ENCODE measurements at regions of chr22 and their contacts with region 1.

Region 1: GRCh38 chr22:31211862-31212730 is at the start of gene LIMK2:
- DNase-seq: peak; percentile 95
- H3K4me3 ChIP-seq: peak within 1 kb of the TSS; percentile 76 to 91
- H3K27ac ChIP-seq: peak within 1 kb of the TSS; percentile 80 to 83
- H3K4me1 ChIP-seq: peaks cover 19% of the 10 kb centered on the region
- H3K27me3 ChIP-seq: no peaks in the 10 kb centered on the region
- CTCF ChIP-seq: peak; percentile 81 to 92 (median 86)
- POLR2A ChIP-seq: peak; percentile 77
- total RNA-seq, gene LIMK2: 92.1 to 128 TPM

Region 2: GRCh38 chr22:31160328-31160978 is 51.6 kb before region 1 on chr22:
- intact Hi-C with region 1: loop called (anchors 5 kb)
- DNase-seq: peak; percentile 17
- H3K4me3 ChIP-seq: peak overlapping the region; percentile 66 to 78
- H3K27ac ChIP-seq: peak overlapping the region; percentile 94 to 97
- H3K4me1 ChIP-seq: no peaks in the 10 kb centered on the region
- H3K27me3 ChIP-seq: no peaks in the 10 kb centered on the region
- CTCF ChIP-seq: no peak
- POLR2A ChIP-seq: no peak

Region 3: DNA sequence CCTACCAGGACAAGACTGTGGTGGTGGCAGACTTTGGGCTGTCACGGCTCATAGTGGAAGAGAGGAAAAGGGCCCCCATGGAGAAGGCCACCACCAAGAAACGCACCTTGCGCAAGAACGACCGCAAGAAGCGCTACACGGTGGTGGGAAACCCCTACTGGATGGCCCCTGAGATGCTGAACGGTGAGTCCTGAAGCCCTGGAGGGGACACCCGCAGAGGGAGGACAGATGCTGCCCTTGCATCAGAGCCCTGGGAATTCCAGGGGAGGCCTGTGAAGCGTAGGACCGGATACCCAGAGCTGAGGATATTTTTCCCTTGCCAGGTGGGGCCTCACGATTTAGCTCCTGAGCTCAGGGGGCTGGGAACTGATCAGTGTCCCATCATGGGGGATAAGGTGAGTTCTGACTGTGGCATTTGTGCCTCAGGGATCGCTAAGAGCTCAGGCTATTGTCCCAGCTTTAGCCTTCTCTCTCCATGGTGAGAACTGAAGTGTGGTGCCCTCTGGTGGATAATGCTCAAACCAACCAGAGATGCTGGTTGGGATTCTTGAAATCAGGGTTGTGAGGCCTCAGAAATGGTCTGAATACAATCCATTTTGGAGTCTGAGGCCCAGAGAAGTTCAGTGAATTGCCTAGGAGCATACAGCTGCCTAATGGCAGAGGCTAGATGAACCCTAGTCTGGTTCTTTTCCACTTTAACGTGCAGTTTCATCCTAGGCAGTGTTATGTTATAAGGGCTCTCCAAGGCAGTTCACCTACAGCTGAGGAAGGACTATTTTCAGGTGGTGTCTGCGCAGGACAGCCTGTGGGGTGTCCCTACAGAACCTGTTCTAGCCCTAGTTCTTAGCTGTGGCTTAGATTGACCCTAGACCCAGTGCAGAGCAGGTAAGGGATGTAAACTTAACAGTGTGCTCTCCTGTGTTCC is 60.7 kb after region 1 on chr22:
- intact Hi-C with region 1: loop called (anchors 10 kb)
- DNase-seq: peak; percentile 58
- H3K4me3 ChIP-seq: no peak overlapping the region
- H3K27ac ChIP-seq: peak overlapping the region; percentile 52 to 63
- H3K4me1 ChIP-seq: no peaks in the 10 kb centered on the region
- H3K27me3 ChIP-seq: no peaks in the 10 kb centered on the region
- CTCF ChIP-seq: peak; percentile 29 to 80 (median 75)
- POLR2A ChIP-seq: no peak

Measured in prostate gland (tissue), 2 donors.